ENCODE measurements at regions of chr2 and their contacts with region 1.

Region 1: GRCh38 chr2:30565851-30566358 is 118.9 kb downstream of the LCLAT1 start:
- ATAC-seq: peak in 2 of 8 experiments; percentile 38 to 96
- H3K4me3 ChIP-seq: no peak overlapping the region
- H3K27ac ChIP-seq: no peak overlapping the region
- H3K4me1 ChIP-seq: no peaks in the 10 kb centered on the region

Region 2: DNA sequence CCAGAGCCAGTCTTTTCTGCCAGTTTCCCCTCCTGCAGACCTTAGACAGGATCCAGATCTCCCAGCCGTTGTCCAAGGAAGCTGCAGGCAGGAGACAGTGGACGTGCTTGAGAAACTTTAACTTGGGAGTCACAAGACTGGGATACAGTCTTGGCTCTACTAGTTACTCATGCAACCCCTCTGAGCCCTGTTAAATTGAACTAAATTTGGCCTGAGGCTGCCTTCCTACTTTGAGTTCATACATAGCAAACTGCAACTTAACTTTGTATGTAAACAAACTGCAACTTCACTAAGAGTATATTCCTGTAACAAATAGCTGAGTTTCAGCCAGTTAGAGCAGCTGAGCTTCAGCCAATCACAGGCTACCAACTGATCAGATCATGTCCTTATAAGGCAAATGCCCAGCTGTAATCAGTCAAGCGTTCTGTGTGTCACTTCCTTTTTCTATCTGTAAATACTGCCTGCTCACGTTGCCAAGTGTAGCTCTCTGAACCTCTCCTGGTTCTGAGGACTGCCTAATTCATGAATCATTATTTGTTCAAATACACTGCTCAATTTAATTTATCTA is 100.5 kb after region 1 on chr2:
- in situ Hi-C with region 1: loop called in 1 of 9 experiments (anchors 25 kb)
- ATAC-seq: peak in 7 of 8 experiments; percentile 14 to 63 (median 46)
- H3K4me3 ChIP-seq: no peak overlapping the region
- H3K27ac ChIP-seq: no peak overlapping the region
- H3K4me1 ChIP-seq: no peaks in the 10 kb centered on the region